Vagina (tissue), 2 donors: ENCODE measurements at regions of chr13 and their contacts with region 1.

Region 1: DNA sequence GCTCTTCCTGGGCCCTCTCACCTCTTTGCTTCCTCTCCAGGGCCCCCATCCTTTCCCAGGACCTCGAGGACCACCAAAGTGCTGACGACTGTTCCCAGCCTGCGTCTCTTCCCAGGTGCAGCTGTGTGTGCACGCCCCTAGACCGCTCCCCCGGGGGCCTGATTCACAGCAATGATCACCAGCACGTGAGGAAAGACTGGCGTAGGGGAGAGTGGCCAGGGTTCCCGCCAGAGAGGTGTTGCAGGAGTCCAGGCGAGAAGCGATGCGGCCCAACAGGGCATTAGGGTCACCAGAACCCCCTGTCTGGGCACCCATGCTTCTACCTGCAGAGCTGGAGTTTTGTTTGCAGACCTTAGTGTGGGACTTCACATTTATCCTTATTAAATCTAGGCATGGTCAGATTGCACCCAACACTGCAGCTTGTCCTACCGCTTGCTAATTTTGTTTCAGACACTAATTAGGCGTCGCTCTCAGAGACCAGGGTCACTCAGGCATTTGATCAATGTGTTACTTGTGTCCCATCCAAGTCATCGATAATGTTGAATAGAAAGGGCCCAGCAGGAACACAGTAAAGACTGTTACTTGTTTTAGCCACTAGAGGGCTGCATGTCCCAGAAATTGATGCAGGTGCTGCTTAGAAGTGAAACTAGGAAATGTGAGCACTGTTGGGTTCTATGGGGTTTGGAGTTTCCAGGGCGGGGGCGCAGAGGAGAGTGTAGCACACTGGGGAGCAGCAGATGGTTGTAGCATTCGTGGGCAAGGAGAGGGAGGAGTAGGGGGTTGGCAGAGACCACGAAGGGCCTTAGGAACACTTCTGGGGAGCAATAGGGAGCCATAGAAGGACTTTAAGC is 53.2 kb downstream of the CDADC1 start:
- DNase-seq: peak in 1 of 2 donors; percentile 87
- H3K4me3 ChIP-seq: peak overlapping the region; percentile 26 to 38
- H3K27ac ChIP-seq: peak overlapping the region; percentile 57
- H3K4me1 ChIP-seq: peaks cover 27% of the 10 kb centered on the region
- H3K27me3 ChIP-seq: no peaks in the 10 kb centered on the region
- CTCF ChIP-seq: peak; percentile 46 to 95 (median 91)
- POLR2A ChIP-seq: no peak

Region 2: GRCh38 chr13:49436890-49437289 is 135.9 kb after region 1 on chr13:
- intact Hi-C with region 1: loop called (anchors 2 kb)
- DNase-seq: no peak
- H3K4me3 ChIP-seq: no peak overlapping the region
- H3K27ac ChIP-seq: peak overlapping the region; percentile 35
- H3K4me1 ChIP-seq: no peaks in the 10 kb centered on the region
- H3K27me3 ChIP-seq: no peaks in the 10 kb centered on the region
- CTCF ChIP-seq: peak in 1 of 3 experiments; percentile 40
- POLR2A ChIP-seq: no peak

Region 3: GRCh38 chr13:49604570-49604969 is 303.6 kb after region 1 on chr13:
- intact Hi-C with region 1: loop called (anchors 5 kb)
- DNase-seq: no peak
- H3K4me3 ChIP-seq: no peak overlapping the region
- H3K27ac ChIP-seq: no peak overlapping the region
- H3K4me1 ChIP-seq: peaks cover 12% of the 10 kb centered on the region
- H3K27me3 ChIP-seq: no peaks in the 10 kb centered on the region
- CTCF ChIP-seq: no peak
- POLR2A ChIP-seq: no peak